ENCODE measurements at regions of chr9 and their contacts with region 1.

Region 1: GRCh38 chr9:126301985-126302603 is 24.5 kb upstream of the MVB12B start:
- DNase-seq: peak; percentile 64
- H3K4me3 Mint-ChIP-seq: no peak overlapping the region
- H3K27ac Mint-ChIP-seq: no peak overlapping the region
- H3K4me1 Mint-ChIP-seq: no peaks in the 10 kb centered on the region
- H3K27me3 Mint-ChIP-seq: peaks cover 11% of the 10 kb centered on the region
- CTCF ChIP-seq: peak; percentile 66

Region 2: GRCh38 chr9:126276056-126276728 is 25.9 kb before region 1 on chr9:
- CTCF ChIA-PET with region 1: no interaction called
- POLR2A ChIA-PET with region 1: no interaction called
- intact Hi-C with region 1: no loop called
- DNase-seq: no peak
- H3K4me3 Mint-ChIP-seq: no peak overlapping the region
- H3K27ac Mint-ChIP-seq: no peak overlapping the region
- H3K4me1 Mint-ChIP-seq: no peaks in the 10 kb centered on the region
- H3K27me3 Mint-ChIP-seq: peaks cover 55% of the 10 kb centered on the region
- CTCF ChIP-seq: no peak

Region 3: GRCh38 chr9:126398403-126399058 is 96.4 kb after region 1 on chr9:
- CTCF ChIA-PET with region 1: interaction called, 52 read pairs
- POLR2A ChIA-PET with region 1: interaction called, 4 read pairs
- intact Hi-C with region 1: loop called (anchors 1 kb)
- DNase-seq: peak; percentile 68
- H3K4me3 Mint-ChIP-seq: no peak overlapping the region
- H3K27ac Mint-ChIP-seq: no peak overlapping the region
- H3K4me1 Mint-ChIP-seq: no peaks in the 10 kb centered on the region
- H3K27me3 Mint-ChIP-seq: no peaks in the 10 kb centered on the region
- CTCF ChIP-seq: peak; percentile 94

Measured in MCF 10A (cell line).